ENCODE measurements at regions of chr19 and their contacts with region 1.

Region 1: GRCh38 chr19:16542045-16542909 is at the start of gene CHERP:
- DNase-seq: peak; percentile 91 to 98
- ATAC-seq: peak; percentile 89 to 95 (median 91)
- H3K4me3 ChIP-seq: peak within 1 kb of the TSS; percentile 94
- H3K4me3 Mint-ChIP-seq: peak within 1 kb of the TSS; percentile 94
- H3K27ac ChIP-seq: peak within 1 kb of the TSS; percentile 71
- H3K27ac Mint-ChIP-seq: peak within 1 kb of the TSS; percentile 86 to 90
- H3K4me1 ChIP-seq: peaks cover 42% of the 10 kb centered on the region
- H3K4me1 Mint-ChIP-seq: peaks cover 48 to 55% of the 10 kb centered on the region in 2 donors
- H3K27me3 ChIP-seq: no peaks in the 10 kb centered on the region
- H3K27me3 Mint-ChIP-seq: no peaks in the 10 kb centered on the region
- CTCF ChIP-seq: no peak
- total RNA-seq, gene CHERP: 46.5 to 70.8 (median 68.2) TPM

Region 2: DNA sequence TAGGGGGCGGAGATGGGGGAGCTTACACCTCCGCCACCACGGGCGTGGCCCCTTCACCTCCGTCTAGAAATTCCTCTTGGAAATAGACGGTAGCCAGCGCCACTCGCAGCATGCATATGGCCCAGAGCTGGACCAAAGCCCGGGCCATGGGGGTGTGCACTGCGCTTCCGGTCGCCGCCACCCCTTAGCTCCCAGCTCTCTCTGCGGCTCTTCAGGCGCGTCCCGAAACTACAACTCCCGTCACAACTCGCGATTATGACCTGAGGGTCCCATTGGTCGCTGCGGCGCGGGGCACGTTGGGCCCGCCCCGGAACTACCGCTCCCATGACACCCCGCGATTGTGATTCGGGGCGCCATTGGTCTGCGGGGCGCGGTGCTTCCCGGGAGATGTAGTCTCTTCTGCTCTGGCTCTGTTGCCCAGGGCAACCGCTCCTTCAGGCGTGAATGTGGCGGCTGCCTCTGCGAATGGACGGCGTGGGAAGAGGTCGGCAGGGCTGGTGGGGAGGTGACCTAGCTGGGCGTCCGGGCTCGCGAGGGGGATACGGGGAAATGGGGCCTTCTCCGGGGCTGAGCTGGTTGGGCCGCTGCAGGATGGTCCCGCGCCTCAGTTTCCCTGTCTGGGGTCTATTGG is 46.2 kb before region 1 on chr19 and contains the starts of genes C19orf44 and CALR3:
- intact Hi-C with region 1: loop called (anchors 1 kb)
- DNase-seq: peak; percentile 95 to 98
- ATAC-seq: peak; percentile 98 to 100 (median 98)
- H3K4me3 ChIP-seq: peak within 1 kb of the TSS; percentile 61
- H3K4me3 Mint-ChIP-seq: peak within 1 kb of the TSS; percentile 98
- H3K27ac ChIP-seq: peak within 1 kb of the TSS; percentile 55
- H3K27ac Mint-ChIP-seq: peak within 1 kb of the TSS; percentile 91 to 95
- H3K4me1 ChIP-seq: peaks cover 16% of the 10 kb centered on the region
- H3K4me1 Mint-ChIP-seq: peaks cover 9 to 12% of the 10 kb centered on the region in 2 donors
- H3K27me3 ChIP-seq: no peaks in the 10 kb centered on the region
- H3K27me3 Mint-ChIP-seq: no peaks in the 10 kb centered on the region
- CTCF ChIP-seq: no peak
- total RNA-seq, gene C19orf44: 1.2 to 2.8 (median 1.4) TPM
- total RNA-seq, gene CALR3: not detected

Region 3: DNA sequence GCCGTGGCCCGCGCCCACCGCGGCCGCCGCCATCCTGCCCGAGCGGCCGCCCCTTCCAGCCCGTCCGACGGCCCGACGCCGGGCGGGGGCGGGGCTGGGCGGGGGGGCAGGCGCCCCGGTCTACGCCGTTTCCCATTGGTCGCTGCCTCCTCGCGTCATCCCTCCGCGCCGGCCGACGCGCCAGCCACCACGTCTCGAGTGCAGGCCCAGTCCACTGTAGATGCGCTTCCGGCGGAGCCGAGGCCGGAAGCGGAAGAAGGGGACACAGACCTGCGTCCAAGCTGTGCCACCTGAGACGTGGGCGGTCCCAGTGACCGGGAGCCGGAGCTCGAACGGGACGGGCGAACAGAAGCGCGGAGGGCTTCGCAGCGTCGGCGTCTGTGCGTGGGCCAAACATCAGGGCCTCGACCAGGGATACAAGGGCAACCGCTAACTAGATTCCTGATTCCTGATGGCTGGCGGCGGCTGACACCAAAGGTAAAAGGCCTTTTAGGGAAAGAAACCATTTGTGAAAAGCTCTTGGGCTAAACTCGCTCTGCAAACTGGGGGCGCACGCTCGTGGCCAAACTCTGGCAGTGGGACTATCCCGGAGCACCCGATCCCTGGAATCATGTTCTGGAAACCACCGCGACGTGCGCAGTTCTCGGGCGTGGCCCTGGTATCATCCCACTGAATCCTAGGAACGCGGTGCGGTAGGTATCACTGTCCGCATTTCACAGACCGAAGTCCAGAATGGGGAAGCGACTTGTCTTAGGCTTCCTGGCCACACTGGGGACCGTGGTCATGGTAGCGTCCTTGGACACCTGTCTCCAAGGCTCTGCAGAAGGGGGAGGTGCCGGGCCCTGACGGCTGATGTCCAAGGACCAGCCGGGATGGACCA is 30.3 kb after region 1 on chr19 and contains the start of gene SLC35E1:
- intact Hi-C with region 1: loop called (anchors 2 kb)
- DNase-seq: peak; percentile 91 to 95
- ATAC-seq: peak; percentile 89 to 97 (median 94)
- H3K4me3 ChIP-seq: peak within 1 kb of the TSS; percentile 91
- H3K4me3 Mint-ChIP-seq: peak within 1 kb of the TSS; percentile 100
- H3K27ac ChIP-seq: peak within 1 kb of the TSS; percentile 93
- H3K27ac Mint-ChIP-seq: peak within 1 kb of the TSS; percentile 97 to 99
- H3K4me1 ChIP-seq: peaks cover 32% of the 10 kb centered on the region
- H3K4me1 Mint-ChIP-seq: peaks cover 32 to 38% of the 10 kb centered on the region in 2 donors
- H3K27me3 ChIP-seq: no peaks in the 10 kb centered on the region
- H3K27me3 Mint-ChIP-seq: no peaks in the 10 kb centered on the region
- CTCF ChIP-seq: no peak
- total RNA-seq, gene SLC35E1: 53.2 to 55.5 (median 54.2) TPM

Region 4: DNA sequence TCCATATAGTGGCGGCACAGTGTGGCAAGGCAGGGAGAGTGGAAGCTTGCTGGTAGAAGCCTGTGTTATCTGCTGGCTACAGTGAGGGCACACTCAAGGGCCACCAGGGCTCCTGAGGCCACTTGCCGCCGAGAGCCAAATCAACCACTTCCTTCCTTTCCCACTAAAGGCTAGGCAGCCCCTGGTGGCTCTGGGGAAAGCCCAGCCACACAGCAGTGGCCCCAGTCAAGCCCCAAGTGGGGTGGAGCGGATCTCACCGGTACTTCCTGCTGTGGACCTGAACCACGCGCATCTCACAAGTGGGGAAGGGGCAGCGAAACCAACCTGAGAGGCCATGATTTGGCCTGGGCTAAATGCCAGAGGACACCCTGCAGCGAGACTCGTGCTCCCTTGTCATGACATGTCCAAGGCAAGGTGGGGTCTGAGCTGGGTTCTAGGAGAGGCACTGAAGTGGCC is 51.9 kb after region 1 on chr19:
- intact Hi-C with region 1: loop called (anchors 1 kb)
- DNase-seq: peak; percentile 68 to 81
- ATAC-seq: peak; percentile 74 to 90 (median 87)
- H3K4me3 ChIP-seq: no peak overlapping the region
- H3K4me3 Mint-ChIP-seq: peak overlapping the region; percentile 82
- H3K27ac ChIP-seq: peak overlapping the region; percentile 62
- H3K27ac Mint-ChIP-seq: peak overlapping the region; percentile 92 to 96
- H3K4me1 ChIP-seq: peaks cover 57% of the 10 kb centered on the region
- H3K4me1 Mint-ChIP-seq: peaks cover 49 to 55% of the 10 kb centered on the region in 2 donors
- H3K27me3 ChIP-seq: no peaks in the 10 kb centered on the region
- H3K27me3 Mint-ChIP-seq: no peaks in the 10 kb centered on the region
- CTCF ChIP-seq: no peak

Region 5: DNA sequence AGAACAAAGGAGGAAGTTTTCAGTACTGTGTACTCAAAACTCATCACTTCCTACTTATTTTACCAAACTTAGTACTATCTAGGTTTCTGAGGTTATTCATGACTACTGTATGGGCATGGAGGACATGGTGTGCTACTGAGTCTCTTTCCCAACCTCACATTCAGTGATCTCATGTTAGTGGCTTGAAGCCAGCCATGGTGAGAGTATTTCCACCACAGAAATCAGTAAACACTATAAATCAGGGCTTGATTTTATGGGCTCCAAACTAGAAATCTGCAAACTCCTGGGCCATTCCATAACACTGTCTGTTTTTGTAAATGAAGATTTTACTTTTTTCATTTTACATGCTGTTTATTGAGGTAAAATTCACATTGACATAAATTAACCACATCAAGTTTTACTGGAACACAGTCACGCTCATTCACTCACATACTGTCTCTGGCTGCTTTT is 66.0 kb after region 1 on chr19:
- intact Hi-C with region 1: no loop called
- DNase-seq: no peak
- ATAC-seq: peak in 2 of 3 donors; percentile 28 to 79
- H3K4me3 ChIP-seq: no peak overlapping the region
- H3K4me3 Mint-ChIP-seq: no peak overlapping the region
- H3K27ac ChIP-seq: no peak overlapping the region
- H3K27ac Mint-ChIP-seq: peak overlapping the region in 1 of 2 donors; percentile 41
- H3K4me1 ChIP-seq: peaks cover 17% of the 10 kb centered on the region
- H3K4me1 Mint-ChIP-seq: peaks cover 50 to 57% of the 10 kb centered on the region in 2 donors
- H3K27me3 ChIP-seq: no peaks in the 10 kb centered on the region
- H3K27me3 Mint-ChIP-seq: no peaks in the 10 kb centered on the region
- CTCF ChIP-seq: no peak

Region 6: GRCh38 chr19:16628183-16628983 is 86.1 kb after region 1 on chr19 and contains the start of gene MED26:
- intact Hi-C with region 1: loop called (anchors 1 kb)
- DNase-seq: peak; percentile 94 to 97
- ATAC-seq: peak; percentile 94 to 99 (median 94)
- H3K4me3 ChIP-seq: peak within 1 kb of the TSS; percentile 79
- H3K4me3 Mint-ChIP-seq: peak within 1 kb of the TSS; percentile 92
- H3K27ac ChIP-seq: peak within 1 kb of the TSS; percentile 77
- H3K27ac Mint-ChIP-seq: peak within 1 kb of the TSS; percentile 85 to 95
- H3K4me1 ChIP-seq: peaks cover 18% of the 10 kb centered on the region
- H3K4me1 Mint-ChIP-seq: peaks cover 28 to 42% of the 10 kb centered on the region in 2 donors
- H3K27me3 ChIP-seq: no peaks in the 10 kb centered on the region
- H3K27me3 Mint-ChIP-seq: no peaks in the 10 kb centered on the region
- CTCF ChIP-seq: no peak
- total RNA-seq, gene MED26: 34.7 to 47.5 (median 47.3) TPM

Region 7: GRCh38 chr19:16659831-16660708 is 117.8 kb after region 1 on chr19 and contains the start of gene SMIM7:
- intact Hi-C with region 1: loop called (anchors 1 kb)
- DNase-seq: peak; percentile 97 to 99
- ATAC-seq: peak; percentile 93 to 99 (median 96)
- H3K4me3 ChIP-seq: peak within 1 kb of the TSS; percentile 84
- H3K4me3 Mint-ChIP-seq: peak within 1 kb of the TSS; percentile 97
- H3K27ac ChIP-seq: peak within 1 kb of the TSS; percentile 78
- H3K27ac Mint-ChIP-seq: peak within 1 kb of the TSS; percentile 96 to 97
- H3K4me1 ChIP-seq: peaks cover 35% of the 10 kb centered on the region
- H3K4me1 Mint-ChIP-seq: peaks cover 24 to 34% of the 10 kb centered on the region in 2 donors
- H3K27me3 ChIP-seq: no peaks in the 10 kb centered on the region
- H3K27me3 Mint-ChIP-seq: no peaks in the 10 kb centered on the region
- CTCF ChIP-seq: no peak
- total RNA-seq, gene SMIM7: 63.2 to 88.4 (median 76.0) TPM

Measured in natural killer cell (primary cell).